ENCODE measurements at regions of chr15 and their contacts with region 1.

Region 1: DNA sequence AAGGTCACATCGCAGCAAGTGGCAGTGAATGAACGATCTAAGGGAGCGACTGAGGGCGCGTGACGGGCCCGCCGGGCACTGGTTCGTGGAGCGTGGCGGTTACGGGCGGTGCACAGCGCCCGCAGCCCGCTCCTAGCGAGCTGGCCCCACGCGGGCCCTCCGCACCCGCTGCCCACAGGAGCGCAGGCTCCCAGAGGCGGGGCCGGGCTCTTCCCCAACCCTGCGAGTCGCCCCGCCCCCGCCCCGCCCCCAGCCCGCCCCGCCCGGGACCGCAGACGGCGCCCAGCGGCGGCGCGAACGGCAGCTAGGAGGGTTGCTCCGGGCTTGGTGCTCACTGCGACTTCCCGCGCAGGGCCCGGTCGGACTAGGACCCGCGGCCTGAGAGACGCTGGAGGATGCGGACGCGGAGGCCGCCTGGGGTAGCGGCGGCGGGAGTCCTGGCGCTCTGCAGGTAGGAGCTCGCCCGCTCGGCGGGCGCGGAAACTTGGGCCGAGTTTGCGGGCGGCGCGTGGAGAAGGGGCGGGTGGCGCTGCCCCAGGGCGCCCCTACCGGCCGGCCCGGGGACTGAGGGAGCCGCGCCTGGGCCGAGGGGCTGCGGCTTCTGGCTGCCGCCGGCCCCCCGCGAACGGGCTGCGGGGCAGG is at the start of gene C15orf39:
- DNase-seq: peak; percentile 87
- ATAC-seq: peak; percentile 57
- H3K4me3 Mint-ChIP-seq: peak within 1 kb of the TSS; percentile 86
- H3K27ac Mint-ChIP-seq: peak within 1 kb of the TSS; percentile 89
- H3K4me1 Mint-ChIP-seq: peaks cover 34% of the 10 kb centered on the region
- H3K27me3 Mint-ChIP-seq: no peaks in the 10 kb centered on the region
- total RNA-seq, gene C15orf39: 18.6 to 25.1 TPM

Region 2: DNA sequence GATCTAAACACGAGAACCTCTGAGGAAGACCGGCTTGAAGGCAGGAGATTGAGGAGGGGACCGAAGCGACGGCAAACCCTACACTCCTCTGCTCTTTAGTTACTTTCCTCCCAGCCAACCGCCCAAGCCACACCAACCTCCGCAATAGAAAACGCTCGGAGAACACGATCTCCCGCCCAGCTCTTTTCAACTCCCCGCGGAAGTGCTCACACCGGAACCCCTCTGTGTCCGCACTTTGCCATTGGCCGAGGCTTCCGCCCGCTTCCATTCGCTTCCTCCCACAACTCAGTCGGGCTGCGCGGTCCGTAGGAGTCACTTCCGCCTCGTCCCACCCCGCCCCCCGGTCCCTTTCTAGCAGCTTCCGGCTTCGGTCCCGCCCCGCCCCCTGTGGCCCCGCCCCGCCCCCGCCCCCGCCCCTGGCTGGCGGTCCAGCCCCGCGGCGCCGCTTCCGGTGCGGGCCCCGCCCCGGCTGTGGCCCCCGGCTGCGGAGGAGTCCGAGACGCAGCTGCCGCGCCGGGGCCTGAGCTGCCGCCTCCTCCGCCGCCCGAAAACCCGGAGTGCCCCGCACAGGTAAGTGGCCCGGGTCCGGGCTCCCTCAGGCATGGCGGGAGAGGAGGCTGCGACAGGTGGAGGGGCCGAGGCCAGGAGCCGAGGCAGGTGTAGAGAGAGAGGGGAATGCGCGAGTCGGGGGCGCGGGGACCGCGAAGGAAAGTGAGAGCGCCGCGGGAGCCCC is 660.8 kb before region 1 on chr15 and contains the start of gene ARID3B:
- CTCF ChIA-PET with region 1: no interaction called
- POLR2A ChIA-PET with region 1: no interaction called
- intact Hi-C with region 1: loop called in 1 of 2 experiments (anchors 2 kb)
- DNase-seq: peak; percentile 99
- ATAC-seq: peak; percentile 88
- H3K4me3 Mint-ChIP-seq: peak within 1 kb of the TSS; percentile 94
- H3K27ac Mint-ChIP-seq: peak within 1 kb of the TSS; percentile 98
- H3K4me1 Mint-ChIP-seq: peaks cover 43% of the 10 kb centered on the region
- H3K27me3 Mint-ChIP-seq: peaks cover 2% of the 10 kb centered on the region
- total RNA-seq, gene ARID3B: 23.9 to 25.4 TPM

Region 3: GRCh38 chr15:74873036-74873755 is 328.5 kb before region 1 on chr15 and contains the start of gene SCAMP2:
- CTCF ChIA-PET with region 1: no interaction called
- POLR2A ChIA-PET with region 1: no interaction called
- intact Hi-C with region 1: loop called (anchors 1 to 10 kb)
- DNase-seq: peak; percentile 94
- ATAC-seq: peak; percentile 84
- H3K4me3 Mint-ChIP-seq: peak within 1 kb of the TSS; percentile 87
- H3K27ac Mint-ChIP-seq: peak within 1 kb of the TSS; percentile 87
- H3K4me1 Mint-ChIP-seq: peaks cover 48% of the 10 kb centered on the region
- H3K27me3 Mint-ChIP-seq: no peaks in the 10 kb centered on the region
- total RNA-seq, gene SCAMP2: 61.6 to 83.4 TPM

Region 4: DNA sequence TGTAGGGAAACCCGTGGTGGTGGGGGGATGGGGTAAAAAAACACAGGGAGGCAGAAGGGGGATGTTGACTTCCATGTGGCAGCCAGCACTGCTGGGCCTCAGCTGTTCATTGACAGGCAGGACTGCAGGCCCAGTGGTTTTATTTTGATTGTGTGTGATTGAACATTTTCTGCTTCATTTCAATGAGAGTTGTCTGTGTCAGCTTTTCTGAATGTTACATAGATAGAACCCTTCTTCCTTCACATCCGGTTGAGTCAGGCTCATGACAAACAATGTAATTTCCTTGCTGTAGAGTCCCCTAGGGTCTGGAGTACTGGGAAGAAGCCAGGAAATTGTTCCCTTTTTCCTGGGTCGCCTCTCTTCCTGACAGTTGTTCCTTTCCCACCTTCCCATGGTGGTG is 236.9 kb before region 1 on chr15:
- CTCF ChIA-PET with region 1: interaction called, 3 read pairs
- POLR2A ChIA-PET with region 1: no interaction called
- intact Hi-C with region 1: loop called in 1 of 2 experiments (anchors 1 kb)
- DNase-seq: no peak
- ATAC-seq: no peak
- H3K4me3 Mint-ChIP-seq: no peak overlapping the region
- H3K27ac Mint-ChIP-seq: no peak overlapping the region
- H3K4me1 Mint-ChIP-seq: peaks cover 16% of the 10 kb centered on the region
- H3K27me3 Mint-ChIP-seq: peaks cover 2% of the 10 kb centered on the region

Region 5: GRCh38 chr15:75029378-75030022 is 172.2 kb before region 1 on chr15:
- CTCF ChIA-PET with region 1: interaction called, 64 read pairs
- POLR2A ChIA-PET with region 1: interaction called, 7 read pairs
- intact Hi-C with region 1: loop called (anchors 1 kb)
- DNase-seq: peak; percentile 94
- ATAC-seq: peak; percentile 92
- H3K4me3 Mint-ChIP-seq: no peak overlapping the region
- H3K27ac Mint-ChIP-seq: no peak overlapping the region
- H3K4me1 Mint-ChIP-seq: peaks cover 15% of the 10 kb centered on the region
- H3K27me3 Mint-ChIP-seq: no peaks in the 10 kb centered on the region

Region 6: GRCh38 chr15:75073197-75073596 is 128.5 kb before region 1 on chr15:
- CTCF ChIA-PET with region 1: no interaction called
- POLR2A ChIA-PET with region 1: no interaction called
- intact Hi-C with region 1: no loop called
- DNase-seq: no peak
- ATAC-seq: no peak
- H3K4me3 Mint-ChIP-seq: no peak overlapping the region
- H3K27ac Mint-ChIP-seq: no peak overlapping the region
- H3K4me1 Mint-ChIP-seq: peaks cover 8% of the 10 kb centered on the region
- H3K27me3 Mint-ChIP-seq: peaks cover 21% of the 10 kb centered on the region

Region 7: GRCh38 chr15:75335705-75336355 is 134.1 kb after region 1 on chr15 and contains the start of gene COMMD4:
- CTCF ChIA-PET with region 1: no interaction called
- POLR2A ChIA-PET with region 1: no interaction called
- intact Hi-C with region 1: loop called in 1 of 2 experiments (anchors 1 kb)
- DNase-seq: peak; percentile 95
- ATAC-seq: peak; percentile 88
- H3K4me3 Mint-ChIP-seq: peak within 1 kb of the TSS; percentile 94
- H3K27ac Mint-ChIP-seq: peak within 1 kb of the TSS; percentile 88
- H3K4me1 Mint-ChIP-seq: peaks cover 12% of the 10 kb centered on the region
- H3K27me3 Mint-ChIP-seq: no peaks in the 10 kb centered on the region
- total RNA-seq, gene COMMD4: 47.1 to 67.8 TPM